ENCODE measurements at regions of chr3 and their contacts with region 1.

Region 1: GRCh38 chr3:127822698-127823425 is 547 bp upstream of the MGLL start:
- DNase-seq: peak in 9 of 10 donors; percentile 31 to 93 (median 53)

Region 2: DNA sequence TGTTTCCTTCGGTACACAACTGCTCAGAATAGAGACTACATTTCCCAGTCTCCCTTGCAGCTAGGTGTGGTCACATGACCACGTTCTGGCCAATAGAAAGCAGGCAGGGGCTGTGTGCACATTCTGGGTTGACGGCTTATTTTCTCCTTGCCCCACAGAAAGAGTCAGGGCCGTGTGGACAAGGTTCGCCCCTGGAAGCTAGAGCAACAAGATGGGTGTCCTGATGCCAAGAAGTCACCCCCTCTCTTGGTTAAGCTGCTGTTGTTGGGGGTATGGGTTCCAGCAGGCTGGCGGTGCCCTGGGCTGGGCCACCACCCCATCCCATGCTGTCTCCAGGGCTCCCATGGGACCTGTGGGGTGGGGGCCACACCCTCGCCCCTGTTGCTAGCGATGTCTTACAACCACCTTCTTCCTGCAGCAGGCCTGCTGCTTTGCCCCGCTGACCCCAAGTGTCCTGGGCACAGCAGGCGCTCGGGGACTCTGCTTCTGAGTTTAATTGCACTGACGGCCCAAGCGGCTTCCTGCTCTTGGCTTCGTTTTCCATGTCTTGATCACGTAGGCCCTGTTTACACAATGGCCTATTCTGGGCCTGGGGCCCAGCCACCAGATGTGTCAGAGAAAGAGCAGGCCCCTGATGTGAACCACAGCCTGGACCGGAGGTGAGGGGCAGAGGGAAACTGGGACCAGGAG is 125.2 kb before region 1 on chr3:
- intact Hi-C with region 1: loop called (anchors 5 kb)
- DNase-seq: peak; percentile 69 to 97 (median 80)

Region 3: DNA sequence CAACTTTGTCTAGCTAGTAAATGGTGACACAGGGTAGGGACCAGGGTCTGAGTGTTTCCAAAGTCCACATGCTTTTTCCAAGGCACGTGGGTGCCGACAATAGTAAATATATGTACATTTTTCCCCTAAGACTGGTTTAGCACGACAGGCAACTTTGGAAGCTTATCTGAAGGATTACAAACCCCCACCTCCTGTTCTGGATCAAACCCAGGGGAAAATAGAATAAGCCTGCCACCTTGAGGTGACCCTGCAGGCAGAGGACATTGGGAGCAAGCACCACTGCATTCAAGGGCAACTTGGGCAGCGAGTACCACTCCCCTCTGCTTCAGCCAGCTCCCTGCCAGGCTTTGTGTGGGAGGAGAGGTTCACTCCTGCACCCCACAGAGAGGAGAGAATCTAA is 137.0 kb after region 1 on chr3:
- intact Hi-C with region 1: loop called (anchors 10 kb)
- DNase-seq: peak in 2 of 10 donors; percentile 17 to 65

Region 4: GRCh38 chr3:128282380-128283196 is 459.7 kb after region 1 on chr3:
- intact Hi-C with region 1: no loop called
- DNase-seq: peak in 3 of 10 donors; percentile 17 to 40 (median 29)